Sigmoid colon (tissue), 7 donors: ENCODE measurements at regions of chr13 and their contacts with region 1.

Region 1: DNA sequence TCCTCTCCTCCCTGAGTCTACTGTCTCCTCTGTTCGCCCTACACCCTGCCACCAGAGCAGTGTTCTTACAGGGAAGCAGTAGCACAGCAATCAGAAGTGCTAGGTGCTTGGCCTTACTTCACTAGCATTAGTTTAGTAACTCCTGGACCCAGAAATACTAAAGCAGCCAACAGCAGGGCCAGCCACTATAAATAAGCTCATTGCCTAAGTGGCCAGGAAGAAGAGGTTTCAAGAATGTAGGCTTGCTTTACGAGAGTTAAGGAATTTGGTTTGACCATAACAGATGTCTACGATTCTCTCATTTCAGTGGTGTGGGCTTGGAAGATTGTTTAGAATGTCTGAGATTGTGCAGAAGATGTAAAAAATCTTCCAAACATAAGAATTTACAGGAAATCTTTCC is 103.3 kb downstream of the ZAR1L start:
- DNase-seq: peak; percentile 74
- H3K4me3 ChIP-seq: no peak overlapping the region
- H3K27ac ChIP-seq: peak overlapping the region; percentile 22 to 85 (median 67)
- H3K4me1 ChIP-seq: peaks cover 0 to 57% (median 40%) of the 10 kb centered on the region in 4 donors
- H3K27me3 ChIP-seq: no peaks in the 10 kb centered on the region
- CTCF ChIP-seq: no peak
- EP300 ChIP-seq: peak in 1 of 4 donors; percentile 26
- POLR2A ChIP-seq: no peak

Region 2: DNA sequence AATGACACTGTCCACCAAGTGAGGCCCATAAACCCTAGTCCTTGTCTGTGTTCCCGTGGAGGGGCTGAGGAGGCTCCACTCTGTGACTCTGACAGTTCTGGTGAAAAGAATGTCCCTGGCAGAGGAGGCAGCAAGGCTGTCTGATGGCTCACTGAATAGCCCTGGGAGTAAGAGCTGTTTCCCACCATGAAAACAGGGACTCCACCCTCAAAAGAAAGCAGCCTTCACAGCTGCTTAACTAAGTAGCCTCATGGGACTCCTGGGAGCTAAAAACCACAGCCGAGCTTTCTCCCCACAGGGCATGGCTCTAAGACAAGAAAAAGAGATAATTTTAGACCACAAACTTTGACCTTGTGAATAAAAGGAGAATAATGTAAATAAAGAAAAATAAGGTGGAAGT is 315.4 kb before region 1 on chr13:
- intact Hi-C with region 1: no loop called
- DNase-seq: no peak
- H3K4me3 ChIP-seq: no peak overlapping the region
- H3K27ac ChIP-seq: no peak overlapping the region
- H3K4me1 ChIP-seq: no peaks in the 10 kb centered on the region
- H3K27me3 ChIP-seq: no peaks in the 10 kb centered on the region
- CTCF ChIP-seq: no peak
- EP300 ChIP-seq: no peak
- POLR2A ChIP-seq: no peak

Region 3: DNA sequence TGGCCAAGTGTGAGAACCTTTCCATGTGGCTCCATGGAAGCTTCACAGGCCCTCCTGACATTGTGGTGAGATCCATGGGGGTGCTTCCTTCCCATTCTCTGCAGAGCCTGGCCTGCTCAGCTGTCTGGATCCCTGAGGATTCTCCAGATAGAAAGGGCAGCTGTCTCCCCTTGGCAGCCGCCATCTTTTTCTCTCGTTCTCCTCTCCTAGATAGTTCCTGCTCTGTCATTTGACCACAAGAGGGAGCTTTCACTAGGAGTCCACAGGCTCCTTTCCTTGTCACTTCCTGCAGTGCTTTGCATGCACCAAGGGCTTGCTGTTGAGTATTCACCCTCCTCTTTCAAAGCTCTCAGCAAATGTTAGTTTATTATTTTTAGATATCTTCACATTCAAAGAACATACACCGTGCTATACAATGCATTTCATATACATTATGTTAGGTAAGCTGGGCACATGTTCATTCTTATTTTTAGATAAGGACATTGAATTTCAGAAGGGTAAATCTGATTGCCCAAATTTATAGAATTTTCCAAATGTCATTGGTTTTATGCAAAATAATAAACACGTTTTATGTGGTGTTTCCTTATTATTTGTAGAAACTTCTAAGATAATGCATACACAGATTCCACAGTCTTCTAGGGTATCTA is 47.1 kb before region 1 on chr13:
- intact Hi-C with region 1: loop called (anchors 5 kb)
- DNase-seq: no peak
- H3K4me3 ChIP-seq: no peak overlapping the region
- H3K27ac ChIP-seq: peak overlapping the region in 1 of 4 donors; percentile 5
- H3K4me1 ChIP-seq: peaks cover 0 to 31% (median 14%) of the 10 kb centered on the region in 4 donors
- H3K27me3 ChIP-seq: no peaks in the 10 kb centered on the region
- CTCF ChIP-seq: peak in 1 of 4 experiments; percentile 28
- EP300 ChIP-seq: no peak
- POLR2A ChIP-seq: no peak